H1 (cell line): ENCODE measurements at regions of chr21 and their contacts with region 1.

Region 1: GRCh38 chr21:41745971-41746743 is 20.7 kb downstream of the RIPK4 start:
- DNase-seq: no peak
- H3K4me3 ChIP-seq: no peak overlapping the region
- H3K27ac ChIP-seq: no peak overlapping the region; the same call in 1 of the 2 replicates
- H3K4me1 ChIP-seq: peaks cover 0 to 7% (median under 1%) of the 10 kb centered on the region in 4 experiments; a peak in 2 of 7 replicates
- H3K27me3 ChIP-seq: no peaks in the 10 kb centered on the region; a peak in 1 of 7 replicates
- CTCF ChIP-seq: peak; percentile 56 to 63 (median 60)
- EP300 ChIP-seq: no peak
- POLR2A ChIP-seq: no peak
- RAD21 ChIP-seq: peak; percentile 38 to 61; a peak in 3 of 4 replicates

Region 2: DNA sequence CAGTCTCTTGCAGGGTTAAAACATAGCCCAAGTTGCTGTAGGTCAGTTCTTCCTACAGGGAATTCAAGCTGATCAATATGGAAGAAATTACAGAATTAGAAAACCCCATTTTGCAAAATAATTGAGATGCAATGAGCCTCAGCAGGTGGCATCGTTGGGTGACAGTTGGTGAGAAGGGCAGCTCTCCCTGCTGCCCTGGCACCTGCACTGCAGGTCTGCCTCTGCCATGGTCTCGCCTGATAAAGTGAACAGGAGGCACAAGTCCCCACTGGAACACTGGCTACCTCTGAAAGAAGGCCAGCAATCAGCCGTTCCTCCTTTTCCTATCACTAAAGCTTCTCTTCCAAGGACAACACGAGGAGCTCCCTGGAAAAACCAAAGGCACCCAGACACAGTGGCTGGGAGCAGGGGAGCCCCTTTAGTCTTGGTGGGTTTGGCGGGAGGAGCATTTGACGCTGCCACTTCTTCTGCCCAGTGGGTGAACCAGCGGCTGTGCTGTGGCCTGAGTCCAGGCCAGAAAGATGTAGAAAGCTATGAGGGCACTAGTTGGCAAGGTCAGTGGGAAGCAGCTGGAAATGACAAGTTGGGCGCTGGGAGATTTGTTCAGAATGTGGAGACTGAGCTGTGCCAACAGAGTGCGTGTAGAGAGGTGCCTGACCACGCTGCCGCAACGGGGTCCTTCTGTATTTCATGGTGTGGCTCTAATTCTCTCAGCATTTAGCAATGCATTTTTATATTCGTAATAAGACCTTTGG is 72.4 kb before region 1 on chr21:
- CTCF ChIA-PET with region 1: interaction called, 13 read pairs
- POLR2A ChIA-PET with region 1: no interaction called
- DNase-seq: no peak
- H3K4me3 ChIP-seq: no peak overlapping the region
- H3K27ac ChIP-seq: no peak overlapping the region
- H3K4me1 ChIP-seq: peaks cover 8 to 14% (median 12%) of the 10 kb centered on the region in 4 experiments
- H3K27me3 ChIP-seq: no peaks in the 10 kb centered on the region; a peak in 2 of 7 replicates
- CTCF ChIP-seq: no peak
- EP300 ChIP-seq: no peak
- POLR2A ChIP-seq: no peak
- RAD21 ChIP-seq: no peak

Region 3: DNA sequence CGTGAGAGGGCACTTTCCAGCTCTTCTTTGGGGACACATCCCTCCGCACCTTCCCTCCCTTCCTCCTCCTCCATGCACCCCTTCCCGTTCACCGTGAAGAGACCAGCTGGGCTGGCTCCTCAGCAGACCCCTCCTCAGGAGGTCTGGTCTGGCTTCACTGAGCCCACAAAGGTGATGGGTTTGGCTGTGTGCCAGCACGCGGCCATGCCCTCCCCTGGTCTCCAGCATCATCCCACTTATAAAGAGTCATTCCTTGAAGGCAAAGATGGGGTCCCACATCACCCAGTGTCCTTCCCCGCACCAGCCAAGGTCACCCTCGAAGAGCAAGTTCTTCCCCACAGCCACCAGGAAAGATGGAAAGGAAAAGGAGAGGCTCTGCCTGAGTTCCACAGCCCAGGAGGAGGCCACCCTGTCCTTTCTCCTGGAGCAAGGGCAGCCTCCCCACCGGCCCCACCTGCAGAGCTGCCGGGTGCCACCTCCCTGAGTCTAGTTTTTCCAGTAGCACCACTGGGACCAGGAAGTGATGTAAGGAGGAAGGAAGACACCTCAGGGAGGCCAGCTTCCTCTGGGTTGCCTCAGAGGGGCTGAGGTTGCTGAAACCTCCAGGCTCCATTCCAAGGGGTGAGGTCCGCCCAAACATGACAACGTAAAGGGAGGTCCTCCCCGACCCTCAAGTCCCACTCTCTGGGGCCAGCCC is 12.1 kb before region 1 on chr21:
- CTCF ChIA-PET with region 1: interaction called, 26 read pairs
- POLR2A ChIA-PET with region 1: interaction called, 3 read pairs
- DNase-seq: no peak
- H3K4me3 ChIP-seq: no peak overlapping the region
- H3K27ac ChIP-seq: no peak overlapping the region
- H3K4me1 ChIP-seq: no peaks in the 10 kb centered on the region
- H3K27me3 ChIP-seq: no peaks in the 10 kb centered on the region
- CTCF ChIP-seq: no peak
- EP300 ChIP-seq: no peak
- POLR2A ChIP-seq: no peak
- RAD21 ChIP-seq: no peak

Region 4: DNA sequence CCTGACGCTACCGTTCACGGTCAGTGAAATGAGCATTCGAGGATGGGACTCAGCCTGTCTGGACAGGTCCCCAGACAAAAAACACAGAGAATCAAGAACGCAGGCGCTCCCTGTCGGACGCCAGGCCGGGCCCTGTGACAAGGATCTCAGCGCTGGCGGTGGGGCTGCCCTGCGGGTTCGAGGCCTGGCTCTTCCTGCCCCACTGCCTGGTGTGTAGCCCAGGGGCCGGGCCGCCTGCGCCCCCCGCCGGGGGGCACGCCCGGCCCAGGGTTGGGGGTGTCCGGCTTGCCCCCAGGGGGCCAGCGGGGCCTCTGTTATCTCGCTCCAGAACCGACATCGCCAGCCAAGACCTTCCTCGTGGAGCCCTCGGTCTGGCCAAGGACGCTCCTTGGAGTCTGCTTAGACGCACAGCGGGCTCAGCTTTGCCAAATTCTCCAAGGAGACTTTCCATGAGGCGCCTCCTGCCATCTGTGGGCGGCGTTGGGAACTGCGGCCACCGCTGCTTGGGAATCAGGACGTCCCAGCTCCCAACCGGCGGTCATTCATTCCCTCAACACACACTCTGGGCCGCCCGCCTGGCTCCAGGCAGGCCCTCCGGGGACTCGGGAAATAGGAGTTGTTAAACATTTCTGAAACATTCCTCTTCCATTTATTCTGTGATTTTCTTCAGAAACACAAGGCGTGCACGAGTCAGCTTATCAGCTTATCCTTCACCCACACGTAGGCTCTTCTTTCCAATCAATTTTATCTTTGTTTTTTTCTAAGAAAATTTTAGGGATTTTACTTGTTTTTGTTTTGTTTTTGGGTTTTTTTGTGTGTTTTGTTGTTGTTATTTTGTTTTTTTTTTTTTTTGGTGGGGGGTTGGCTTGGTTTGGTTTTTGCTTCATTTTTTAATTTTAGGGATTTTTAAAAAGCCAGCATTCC is 32.1 kb after region 1 on chr21:
- CTCF ChIA-PET with region 1: interaction called, 17 read pairs
- POLR2A ChIA-PET with region 1: no interaction called
- DNase-seq: peak; percentile 79 to 97
- H3K4me3 ChIP-seq: peak overlapping the region in 1 of 4 experiments; percentile 50; a peak in 4 of 8 replicates
- H3K27ac ChIP-seq: no peak overlapping the region; the same call in 1 of the 2 replicates
- H3K4me1 ChIP-seq: peaks cover 2 to 12% (median 5%) of the 10 kb centered on the region in 4 experiments; a peak in 5 of 7 replicates
- H3K27me3 ChIP-seq: peaks cover 0 to 3% (median under 1%) of the 10 kb centered on the region in 4 experiments; a peak in 4 of 7 replicates
- CTCF ChIP-seq: peak; percentile 81 to 90 (median 86)
- EP300 ChIP-seq: no peak
- POLR2A ChIP-seq: no peak; a peak in 1 of 3 replicates
- RAD21 ChIP-seq: peak; percentile 85 to 91